RWPE1 (cell line): ENCODE measurements at regions of chr14 and their contacts with region 1.

Region 1: GRCh38 chr14:99320105-99320572 is 48.1 kb upstream of the BCL11B start:
- DNase-seq: peak; percentile 64
- H3K27ac ChIP-seq: no peak overlapping the region
- CTCF ChIP-seq: peak; percentile 87

Region 2: GRCh38 chr14:99047441-99048031 is 272.6 kb before region 1 on chr14:
- CTCF ChIA-PET with region 1: no interaction called
- POLR2A ChIA-PET with region 1: no interaction called
- DNase-seq: no peak
- H3K27ac ChIP-seq: no peak overlapping the region
- CTCF ChIP-seq: no peak

Region 3: DNA sequence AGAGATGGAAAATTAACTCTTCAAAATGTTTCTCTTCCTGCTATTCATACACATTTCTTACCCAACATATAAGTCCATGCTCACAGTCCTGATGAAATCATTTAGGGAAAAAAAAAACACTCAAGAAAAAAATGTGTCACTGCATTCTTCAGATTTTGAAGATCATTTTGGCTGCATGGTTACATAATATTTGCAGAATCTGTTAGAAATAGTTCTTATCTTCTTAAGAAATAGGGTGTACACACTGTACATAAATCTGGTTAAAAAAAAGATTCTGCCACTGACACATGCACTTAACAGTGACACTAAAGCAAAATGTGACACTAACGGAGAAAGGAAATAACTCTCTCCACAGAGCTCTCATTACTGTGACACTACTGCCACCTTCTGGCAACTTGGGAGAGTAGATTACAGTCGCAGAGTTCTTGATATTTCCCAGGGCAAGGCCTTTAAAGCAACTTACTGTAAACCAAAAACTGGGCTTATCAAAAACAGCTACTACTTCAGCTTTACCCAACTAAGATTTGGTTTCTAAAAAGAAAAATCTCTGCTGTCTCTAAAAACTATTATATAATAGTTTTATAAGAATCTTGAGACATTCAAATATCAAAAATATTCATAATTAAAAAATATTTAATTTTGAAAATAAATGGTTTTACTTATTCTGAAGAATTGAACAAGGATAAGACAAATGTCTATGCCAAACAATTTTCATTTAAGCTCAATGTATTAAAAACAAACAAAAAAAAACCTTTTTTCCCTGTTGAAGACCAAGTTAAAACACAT is 95.5 kb after region 1 on chr14:
- CTCF ChIA-PET with region 1: interaction called, 14 read pairs
- POLR2A ChIA-PET with region 1: no interaction called
- DNase-seq: peak; percentile 63
- H3K27ac ChIP-seq: no peak overlapping the region
- CTCF ChIP-seq: peak; percentile 82